ENCODE measurements at regions of chr7 and their contacts with region 1.

Region 1: DNA sequence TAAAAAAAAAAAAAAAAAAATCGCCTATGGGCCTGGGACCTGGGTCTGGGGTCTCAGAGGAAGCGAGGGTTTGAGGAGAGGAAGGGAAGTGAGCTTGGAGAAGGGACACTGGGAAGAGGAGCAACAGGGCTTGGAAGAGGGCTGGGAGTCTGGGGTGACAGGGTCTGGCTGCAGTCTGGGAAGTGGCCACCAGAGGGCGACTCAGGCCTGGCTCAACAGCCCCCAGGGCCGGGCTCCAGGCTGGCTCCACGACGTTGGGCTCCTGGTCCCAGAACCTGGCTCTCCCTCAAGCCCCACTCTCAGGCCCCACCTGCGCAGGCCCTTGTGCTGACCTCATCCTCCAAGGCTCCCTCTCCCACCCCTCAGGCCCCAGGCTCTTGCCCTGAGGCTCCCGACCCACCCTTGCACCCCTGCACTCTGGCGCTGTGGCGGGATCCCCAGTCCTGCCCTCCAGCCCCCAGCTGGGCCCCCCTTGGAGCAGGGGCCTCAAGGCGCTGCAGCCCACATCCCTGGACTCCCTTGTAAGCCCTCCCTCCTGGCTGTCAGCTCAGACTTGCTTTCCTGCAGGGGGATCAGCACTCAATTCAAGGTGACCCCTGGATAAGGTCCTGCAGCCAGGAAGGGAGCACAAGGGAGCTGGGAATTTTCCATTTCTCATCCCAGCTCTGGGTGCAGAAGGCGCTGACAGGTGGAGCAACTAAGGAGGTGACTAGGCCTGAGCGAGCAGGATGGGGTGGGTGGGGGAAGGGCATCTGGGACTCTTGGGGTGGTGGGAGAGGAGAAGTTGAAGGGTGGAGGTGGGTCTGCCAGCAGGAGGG is 5.4 kb upstream of the SPACDR start:
- DNase-seq: peak; percentile 67 to 78 (median 74)
- H3K4me3 ChIP-seq: no peak overlapping the region
- H3K4me3 Mint-ChIP-seq: no peak overlapping the region
- H3K27ac ChIP-seq: no peak overlapping the region
- H3K27ac Mint-ChIP-seq: peak overlapping the region in 1 of 7 donors; percentile 38
- H3K4me1 ChIP-seq: peaks cover 22 to 25% of the 10 kb centered on the region in 2 donors
- H3K4me1 Mint-ChIP-seq: peaks cover 32% of the 10 kb centered on the region
- H3K27me3 ChIP-seq: no peaks in the 10 kb centered on the region
- H3K27me3 Mint-ChIP-seq: peaks cover 0 to 3% (median 0%) of the 10 kb centered on the region in 3 donors
- CTCF ChIP-seq: peak; percentile 86

Region 2: GRCh38 chr7:100493476-100494264 is 24.2 kb after region 1 on chr7:
- intact Hi-C with region 1: no loop called
- DNase-seq: peak in 2 of 3 donors; percentile 13 to 31
- H3K4me3 ChIP-seq: peak overlapping the region in 1 of 3 experiments; percentile 56
- H3K4me3 Mint-ChIP-seq: peak overlapping the region; percentile 57 to 84
- H3K27ac ChIP-seq: no peak overlapping the region
- H3K27ac Mint-ChIP-seq: no peak overlapping the region
- H3K4me1 ChIP-seq: peaks cover 4 to 13% of the 10 kb centered on the region in 2 donors
- H3K4me1 Mint-ChIP-seq: peaks cover 9% of the 10 kb centered on the region
- H3K27me3 ChIP-seq: peaks cover 5 to 30% of the 10 kb centered on the region in 2 donors
- H3K27me3 Mint-ChIP-seq: peaks cover 44 to 66% (median 45%) of the 10 kb centered on the region in 3 donors
- CTCF ChIP-seq: no peak

Region 3: DNA sequence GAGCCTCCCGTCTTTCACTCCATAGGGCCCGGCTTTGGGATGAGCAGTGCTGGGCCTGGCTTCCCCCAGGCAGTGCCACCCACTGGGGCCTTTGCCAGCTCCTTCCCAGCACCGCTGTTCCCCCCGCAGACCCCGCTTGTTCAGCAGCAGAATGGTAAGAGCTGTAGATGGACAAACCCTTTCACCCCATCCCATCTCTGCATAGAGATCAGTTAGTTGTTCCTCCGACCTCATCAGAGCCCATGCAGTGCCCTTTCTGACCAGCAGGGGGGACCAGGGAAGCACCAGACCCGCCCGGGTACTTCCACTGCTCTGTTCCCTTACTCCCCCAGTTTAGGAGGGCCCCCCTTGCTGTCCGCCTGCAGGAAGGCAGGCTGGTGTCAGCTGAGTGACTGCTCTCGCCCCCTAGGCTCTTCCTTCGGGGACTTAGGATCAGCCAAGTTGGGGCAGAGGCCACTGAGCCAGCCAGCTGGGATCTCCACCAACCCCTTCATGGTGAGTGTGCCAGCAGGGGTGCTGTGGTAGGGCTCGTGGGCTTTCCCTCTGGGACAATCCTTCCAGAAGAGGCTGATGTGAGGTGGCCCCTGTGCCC is 94.5 kb after region 1 on chr7:
- intact Hi-C with region 1: loop called in 1 of 2 experiments (anchors 5 kb)
- DNase-seq: peak in 2 of 3 donors; percentile 65 to 69
- H3K4me3 ChIP-seq: no peak overlapping the region
- H3K4me3 Mint-ChIP-seq: peak overlapping the region in 1 of 2 donors; percentile 59
- H3K27ac ChIP-seq: no peak overlapping the region
- H3K27ac Mint-ChIP-seq: peak overlapping the region in 1 of 7 donors; percentile 28
- H3K4me1 ChIP-seq: peaks cover 0 to 10% of the 10 kb centered on the region in 2 donors
- H3K4me1 Mint-ChIP-seq: peaks cover 10% of the 10 kb centered on the region
- H3K27me3 ChIP-seq: peaks cover 0 to 2% of the 10 kb centered on the region in 2 donors
- H3K27me3 Mint-ChIP-seq: peaks cover 0 to 7% (median 2%) of the 10 kb centered on the region in 3 donors
- CTCF ChIP-seq: peak; percentile 97

Region 4: GRCh38 chr7:100632951-100633717 is 163.7 kb after region 1 on chr7:
- intact Hi-C with region 1: no loop called
- DNase-seq: peak; percentile 40 to 55 (median 49)
- H3K4me3 ChIP-seq: peak overlapping the region; percentile 28 to 79 (median 50)
- H3K4me3 Mint-ChIP-seq: peak overlapping the region; percentile 86 to 95
- H3K27ac ChIP-seq: no peak overlapping the region
- H3K27ac Mint-ChIP-seq: peak overlapping the region in 5 of 7 donors; percentile 20 to 79 (median 72)
- H3K4me1 ChIP-seq: peaks cover 6 to 14% of the 10 kb centered on the region in 2 donors
- H3K4me1 Mint-ChIP-seq: peaks cover 14% of the 10 kb centered on the region
- H3K27me3 ChIP-seq: peaks cover 0 to 7% of the 10 kb centered on the region in 2 donors
- H3K27me3 Mint-ChIP-seq: peaks cover 15 to 34% (median 30%) of the 10 kb centered on the region in 3 donors
- CTCF ChIP-seq: peak; percentile 63

Region 5: GRCh38 chr7:100726996-100727761 is 257.7 kb after region 1 on chr7:
- intact Hi-C with region 1: loop called (anchors 2 to 5 kb)
- DNase-seq: no peak
- H3K4me3 ChIP-seq: no peak overlapping the region
- H3K4me3 Mint-ChIP-seq: no peak overlapping the region
- H3K27ac ChIP-seq: no peak overlapping the region
- H3K27ac Mint-ChIP-seq: no peak overlapping the region
- H3K4me1 ChIP-seq: no peaks in the 10 kb centered on the region
- H3K4me1 Mint-ChIP-seq: peaks cover 8% of the 10 kb centered on the region
- H3K27me3 ChIP-seq: peaks cover 0 to under 1% of the 10 kb centered on the region in 2 donors
- H3K27me3 Mint-ChIP-seq: peaks cover 20 to 33% (median 26%) of the 10 kb centered on the region in 3 donors
- CTCF ChIP-seq: no peak